Activated T-helper 2 cell treated with anti-CD3 and anti-CD28 coated beads, Interferon-gamma antibody, Interleukin-2, Interleukin-4, amounts not matched to agents 10 μg/mL and 5 μg/mL and 100 μg/mL, durations not matched to agents 14 hours and 24 hours and 36 hours (primary cell): ENCODE measurements at regions of chr10 and their contacts with region 1.

Region 1: DNA sequence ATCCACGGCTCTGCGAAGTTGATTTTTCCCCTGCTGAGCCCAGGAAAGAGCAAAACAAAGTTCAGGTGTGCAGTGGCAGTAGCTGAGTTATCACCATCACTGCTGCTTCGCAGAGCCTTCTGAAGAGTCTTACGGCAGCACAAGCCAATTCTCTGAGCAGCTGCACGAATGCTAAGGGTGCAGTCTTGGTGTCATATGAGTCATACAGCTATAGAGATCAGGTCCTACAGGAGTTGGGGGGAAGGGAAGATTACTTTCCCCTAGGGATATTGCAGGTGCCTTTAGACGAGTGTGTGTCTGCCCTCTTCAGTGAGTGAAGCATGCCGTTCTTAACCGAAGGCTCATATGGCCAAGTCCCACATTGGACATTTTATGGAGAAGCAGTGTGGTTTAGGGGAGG is 227.8 kb downstream of the CELF2 start:
- DNase-seq: no peak
- H3K4me3 Mint-ChIP-seq: no peak overlapping the region
- H3K27ac Mint-ChIP-seq: no peak overlapping the region
- H3K4me1 Mint-ChIP-seq: peaks cover 35% of the 10 kb centered on the region
- H3K27me3 Mint-ChIP-seq: no peaks in the 10 kb centered on the region

Region 2: DNA sequence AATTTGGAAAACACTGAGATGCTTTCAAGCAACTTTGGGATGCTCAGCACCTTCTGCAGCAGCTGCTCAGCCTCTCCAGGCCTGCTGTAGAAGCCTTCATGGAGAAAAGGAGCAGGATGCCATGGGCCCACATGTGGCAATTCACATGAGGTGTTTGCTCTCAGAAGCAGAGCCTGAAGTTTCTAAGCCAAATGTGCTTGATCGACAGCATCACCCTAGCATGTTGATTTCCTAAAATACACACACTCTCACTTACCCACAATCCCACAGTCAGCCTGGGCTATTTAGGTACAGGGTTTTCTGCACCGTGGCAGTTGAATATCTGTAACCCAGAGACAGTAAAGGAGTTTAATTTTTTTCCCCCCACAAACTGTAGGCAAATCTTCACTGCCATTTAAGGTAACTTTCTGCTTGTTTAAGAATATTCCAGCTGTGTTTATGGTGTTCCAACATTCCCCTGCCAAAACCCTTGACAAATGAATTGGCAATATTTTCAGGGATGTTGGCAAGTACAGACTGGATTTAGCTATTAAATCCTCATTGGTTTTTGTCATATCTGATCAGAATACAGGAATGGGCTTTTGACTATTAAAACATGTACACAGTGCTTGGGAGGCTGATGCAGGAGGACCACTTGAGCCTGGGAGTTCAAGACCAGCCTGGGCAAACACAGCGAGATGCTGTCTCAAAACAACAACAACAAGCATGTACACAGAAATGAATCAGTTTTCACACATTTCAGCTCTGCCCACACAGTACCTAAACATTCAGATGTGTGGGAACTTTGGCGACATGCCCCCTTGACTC is 16.4 kb after region 1 on chr10:
- intact Hi-C with region 1: loop called (anchors 2 kb)
- DNase-seq: no peak
- H3K4me3 Mint-ChIP-seq: no peak overlapping the region
- H3K27ac Mint-ChIP-seq: peak overlapping the region; percentile 67
- H3K4me1 Mint-ChIP-seq: peaks cover 52% of the 10 kb centered on the region
- H3K27me3 Mint-ChIP-seq: no peaks in the 10 kb centered on the region

Region 3: GRCh38 chr10:11454958-11455566 is 209.6 kb after region 1 on chr10:
- intact Hi-C with region 1: no loop called
- DNase-seq: no peak
- H3K4me3 Mint-ChIP-seq: no peak overlapping the region
- H3K27ac Mint-ChIP-seq: no peak overlapping the region
- H3K4me1 Mint-ChIP-seq: peaks cover 4% of the 10 kb centered on the region
- H3K27me3 Mint-ChIP-seq: peaks cover 19% of the 10 kb centered on the region